H1 (cell line): ENCODE measurements at regions of chr20 and their contacts with region 1.

Region 1: DNA sequence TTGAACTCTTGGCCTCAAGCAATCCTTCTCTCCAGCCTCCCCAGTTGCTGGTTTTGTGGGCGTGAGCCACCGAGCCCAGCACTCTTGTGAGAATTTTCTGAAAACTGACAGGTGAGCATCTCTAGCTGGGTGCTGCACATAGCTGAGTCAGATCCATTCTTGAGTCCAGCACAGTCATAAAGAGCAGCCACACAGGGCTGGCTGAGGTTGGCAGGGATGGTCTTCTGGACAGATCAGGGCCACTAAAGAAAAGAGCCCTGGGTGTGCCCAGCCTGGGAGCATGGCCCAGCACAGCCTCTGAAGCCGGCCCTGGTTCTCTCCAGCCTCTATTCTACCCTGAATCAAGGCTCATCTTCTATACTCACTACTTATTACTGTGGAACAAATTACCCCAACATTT is 11.5 kb downstream of the DLGAP4 start:
- DNase-seq: no peak
- H3K4me3 ChIP-seq: no peak overlapping the region
- H3K27ac ChIP-seq: no peak overlapping the region
- H3K4me1 ChIP-seq: peaks cover 0 to 5% (median 2%) of the 10 kb centered on the region in 4 experiments; a peak in 3 of 7 replicates
- H3K27me3 ChIP-seq: no peaks in the 10 kb centered on the region
- CTCF ChIP-seq: no peak
- EP300 ChIP-seq: no peak
- POLR2A ChIP-seq: no peak
- RAD21 ChIP-seq: no peak

Region 2: GRCh38 chr20:36334296-36335205 is 16.9 kb after region 1 on chr20:
- CTCF ChIA-PET with region 1: interaction called, 11 read pairs
- POLR2A ChIA-PET with region 1: interaction called, 6 read pairs
- DNase-seq: no peak
- H3K4me3 ChIP-seq: no peak overlapping the region
- H3K27ac ChIP-seq: no peak overlapping the region
- H3K4me1 ChIP-seq: peaks cover 6 to 22% (median 11%) of the 10 kb centered on the region in 4 experiments
- H3K27me3 ChIP-seq: peaks cover 2 to 33% (median 30%) of the 10 kb centered on the region in 4 experiments; a peak in 6 of 7 replicates
- CTCF ChIP-seq: no peak
- EP300 ChIP-seq: no peak
- POLR2A ChIP-seq: no peak
- RAD21 ChIP-seq: no peak